ENCODE measurements at regions of chr4 and their contacts with region 1.

Region 1: GRCh38 chr4:169619959-169620879 is at the start of gene CLCN3:
- DNase-seq: peak; percentile 98
- H3K4me3 ChIP-seq: peak within 1 kb of the TSS; percentile 57 to 79 (median 74)
- H3K27ac ChIP-seq: peak within 1 kb of the TSS; percentile 89 to 95 (median 93)
- H3K4me1 ChIP-seq: peaks cover 16 to 33% (median 30%) of the 10 kb centered on the region in 4 donors
- H3K27me3 ChIP-seq: no peaks in the 10 kb centered on the region
- CTCF ChIP-seq: peak in 2 of 3 experiments; percentile 17 to 27
- EP300 ChIP-seq: peak; percentile 69
- POLR2A ChIP-seq: peak; percentile 74
- total RNA-seq, gene CLCN3: 11.2 to 17.7 (median 14.9) TPM

Region 2: DNA sequence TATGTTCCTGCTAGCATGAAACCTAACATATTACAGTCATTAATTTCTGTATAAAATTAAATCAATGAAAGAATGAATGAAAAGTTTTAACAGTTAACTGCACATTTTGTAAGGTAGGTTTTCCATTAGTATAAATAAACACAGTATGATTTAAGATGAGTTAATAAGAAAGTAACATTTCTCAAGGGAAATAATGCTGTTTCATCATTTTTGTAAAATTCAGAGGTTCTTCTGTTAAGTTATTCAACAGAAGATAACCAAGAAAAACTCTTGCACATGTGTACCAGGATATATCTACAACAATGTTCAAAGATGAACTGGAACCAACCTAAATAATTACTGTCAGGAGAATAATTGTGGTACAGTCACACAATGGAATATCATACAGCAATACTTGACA is 96.4 kb before region 1 on chr4:
- intact Hi-C with region 1: no loop called
- DNase-seq: no peak
- H3K4me3 ChIP-seq: no peak overlapping the region
- H3K27ac ChIP-seq: no peak overlapping the region
- H3K4me1 ChIP-seq: no peaks in the 10 kb centered on the region
- H3K27me3 ChIP-seq: no peaks in the 10 kb centered on the region
- CTCF ChIP-seq: no peak
- EP300 ChIP-seq: no peak
- POLR2A ChIP-seq: no peak

Region 3: GRCh38 chr4:169659716-169660670 is 39.8 kb after region 1 on chr4:
- intact Hi-C with region 1: loop called (anchors 5 kb)
- DNase-seq: no peak
- H3K4me3 ChIP-seq: peak overlapping the region; percentile 45 to 57 (median 53)
- H3K27ac ChIP-seq: peak overlapping the region; percentile 75 to 82 (median 80)
- H3K4me1 ChIP-seq: peaks cover 22 to 48% (median 32%) of the 10 kb centered on the region in 4 donors
- H3K27me3 ChIP-seq: no peaks in the 10 kb centered on the region
- CTCF ChIP-seq: no peak
- EP300 ChIP-seq: no peak
- POLR2A ChIP-seq: no peak

Region 4: DNA sequence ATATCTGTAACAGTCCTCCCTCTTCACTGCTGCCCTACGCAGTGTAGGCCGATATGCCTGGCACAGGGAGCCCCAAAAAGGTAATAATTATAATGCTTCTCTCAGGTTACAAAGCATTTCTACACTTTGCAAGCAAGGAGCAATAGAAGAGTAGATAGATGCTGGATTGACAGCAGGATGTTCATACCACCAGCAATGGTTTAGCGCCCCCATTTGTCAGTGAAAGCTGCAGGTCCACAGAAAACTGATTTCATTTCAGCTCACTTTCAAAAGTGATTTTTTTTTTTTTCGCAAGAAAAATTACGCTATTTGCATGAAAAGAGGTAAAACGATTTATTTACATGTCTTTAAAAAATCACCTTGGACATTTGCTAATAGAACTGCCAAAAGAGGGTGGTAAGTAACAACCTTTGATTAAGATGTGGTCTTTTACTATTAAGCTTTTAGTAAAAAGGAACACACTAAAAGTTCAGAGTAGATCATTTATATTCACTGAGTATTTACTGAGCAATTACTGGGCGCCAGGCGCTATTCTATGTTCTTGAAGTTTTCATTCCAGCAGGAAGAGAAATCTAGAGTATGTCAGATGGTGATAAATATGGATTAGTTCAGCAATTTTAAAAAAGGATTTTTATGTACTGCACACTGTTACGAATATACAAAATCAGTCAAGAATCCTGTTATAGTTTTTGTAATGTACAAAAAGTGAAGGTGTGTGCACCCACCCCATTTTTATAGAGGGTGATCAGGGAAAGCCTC is 103.2 kb after region 1 on chr4:
- intact Hi-C with region 1: loop called (anchors 10 kb)
- DNase-seq: no peak
- H3K4me3 ChIP-seq: no peak overlapping the region
- H3K27ac ChIP-seq: no peak overlapping the region
- H3K4me1 ChIP-seq: no peaks in the 10 kb centered on the region
- H3K27me3 ChIP-seq: no peaks in the 10 kb centered on the region
- CTCF ChIP-seq: no peak
- EP300 ChIP-seq: no peak
- POLR2A ChIP-seq: no peak

Region 5: DNA sequence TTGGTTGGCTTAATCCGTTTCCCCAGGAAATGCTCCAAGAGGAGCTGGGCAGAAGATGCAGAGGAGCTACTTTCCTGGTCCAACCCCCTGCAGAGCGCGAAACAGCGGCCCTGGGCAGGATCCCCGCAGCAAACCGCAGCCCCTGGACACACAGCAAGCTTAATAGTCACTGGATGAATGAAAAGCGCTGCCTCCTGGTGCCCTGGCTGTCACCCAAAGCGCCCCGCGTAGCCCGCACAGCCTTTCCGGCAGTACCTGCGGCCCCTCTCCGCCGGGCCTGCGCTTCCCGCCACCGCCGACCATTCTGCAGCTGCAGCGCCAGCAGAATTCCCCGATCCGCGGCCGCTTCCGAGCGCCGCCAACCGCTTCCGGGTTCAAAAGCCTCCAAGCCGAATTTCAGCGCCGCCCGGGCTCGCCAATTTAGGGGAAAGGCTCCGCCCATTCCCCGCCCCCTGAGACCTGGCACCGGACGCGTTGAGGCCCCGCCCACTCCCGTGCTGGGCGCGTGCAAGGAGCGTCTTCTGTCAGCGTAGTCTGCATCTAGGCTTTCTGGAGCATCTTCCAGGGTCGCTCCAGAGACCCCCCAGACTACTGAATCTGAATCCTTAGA is 137.5 kb after region 1 on chr4 and contains the start of gene HPF1:
- intact Hi-C with region 1: loop called (anchors 5 kb)
- DNase-seq: peak; percentile 98
- H3K4me3 ChIP-seq: peak within 1 kb of the TSS; percentile 75 to 91 (median 80)
- H3K27ac ChIP-seq: peak within 1 kb of the TSS; percentile 70 to 86 (median 78)
- H3K4me1 ChIP-seq: peaks cover 10 to 25% (median 23%) of the 10 kb centered on the region in 4 donors
- H3K27me3 ChIP-seq: no peaks in the 10 kb centered on the region
- CTCF ChIP-seq: peak in 1 of 3 experiments; percentile 24
- EP300 ChIP-seq: peak; percentile 58
- POLR2A ChIP-seq: no peak
- total RNA-seq, gene HPF1: 15.2 to 33.1 (median 17.7) TPM

Region 6: DNA sequence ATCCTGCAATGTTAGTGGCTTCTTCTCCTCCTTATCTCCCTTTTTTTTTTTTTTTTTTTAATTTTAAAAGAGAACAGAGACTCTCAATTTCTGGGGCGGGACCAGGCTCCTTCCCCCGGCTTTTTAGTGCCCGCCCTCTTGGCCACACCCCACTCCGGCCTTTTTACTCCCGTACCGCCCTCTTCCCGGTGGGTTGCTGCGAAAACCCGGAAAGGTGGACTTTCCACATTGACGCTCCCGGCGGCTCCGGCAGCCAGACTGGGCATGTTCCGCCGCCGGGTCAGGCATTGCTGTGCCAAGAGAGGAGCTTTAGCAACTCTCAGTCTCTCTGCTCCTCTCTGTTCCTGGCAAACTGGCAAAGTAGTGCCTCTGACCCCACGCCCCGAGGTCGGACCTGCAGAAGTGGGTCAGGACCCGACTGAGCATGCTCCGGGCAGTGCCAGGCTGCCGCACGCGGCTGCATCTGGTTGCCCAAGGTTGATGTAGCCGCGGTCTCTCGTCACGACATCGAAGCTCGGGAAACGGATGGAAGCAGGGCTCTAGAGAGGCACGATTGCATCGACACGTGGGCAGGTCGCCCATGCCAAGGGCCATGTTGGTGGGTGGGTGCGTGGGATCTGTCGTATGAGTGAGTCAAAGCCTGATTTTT is 407.1 kb after region 1 on chr4:
- intact Hi-C with region 1: loop called (anchors 2 kb)
- DNase-seq: peak; percentile 97
- H3K4me3 ChIP-seq: peak overlapping the region; percentile 74 to 97 (median 92)
- H3K27ac ChIP-seq: peak overlapping the region; percentile 92 to 95 (median 93)
- H3K4me1 ChIP-seq: peaks cover 4 to 14% (median 13%) of the 10 kb centered on the region in 4 donors
- H3K27me3 ChIP-seq: peaks cover 0 to 2% (median 0%) of the 10 kb centered on the region in 4 donors
- CTCF ChIP-seq: peak in 1 of 3 experiments; percentile 20
- EP300 ChIP-seq: no peak
- POLR2A ChIP-seq: peak; percentile 47

Measured in esophagus muscularis mucosa (tissue), 4 donors.